ENCODE measurements at regions of chr21 and their contacts with region 1.

Region 1: GRCh38 chr21:36927719-36928117 is 38.8 kb downstream of the HLCS start:
- DNase-seq: peak; percentile 78 to 84 (median 83)
- ATAC-seq: peak; percentile 97
- H3K4me3 ChIP-seq: no peak overlapping the region
- H3K27ac ChIP-seq: no peak overlapping the region
- H3K4me1 ChIP-seq: peaks cover 0 to 3% of the 10 kb centered on the region in 2 experiments; a peak in 1 of 5 replicates
- H3K27me3 ChIP-seq: no peaks in the 10 kb centered on the region
- CTCF ChIP-seq: peak; percentile 89 to 97 (median 95)
- EP300 ChIP-seq: no peak
- POLR2A ChIP-seq: no peak
- RAD21 ChIP-seq: peak; percentile 80 to 91

Region 2: DNA sequence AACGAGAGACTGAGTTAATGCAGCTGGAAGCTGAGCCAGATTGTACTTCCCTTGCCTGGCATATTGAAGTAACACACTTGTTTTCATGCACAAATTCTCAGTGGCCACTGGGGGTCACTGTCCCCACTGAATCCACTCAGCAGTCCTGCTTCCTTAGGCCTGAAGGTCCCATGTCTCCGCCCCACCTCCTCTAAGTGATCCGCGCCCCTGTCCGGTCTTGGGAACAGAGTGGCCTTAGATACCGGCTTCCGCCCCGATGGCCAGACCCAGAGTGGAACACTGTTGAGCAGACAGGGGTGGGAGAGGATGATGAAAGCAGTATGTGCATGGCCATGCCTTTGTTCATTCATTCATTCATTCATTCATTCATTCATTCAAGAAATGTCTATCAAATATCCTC is 507.7 kb before region 1 on chr21:
- CTCF ChIA-PET with region 1: interaction called, 5 read pairs
- POLR2A ChIA-PET with region 1: no interaction called
- in situ Hi-C with region 1: no loop called
- intact Hi-C with region 1: loop called (anchors 2 kb)
- DNase-seq: peak; percentile 89 to 92 (median 90)
- ATAC-seq: peak; percentile 95
- H3K4me3 ChIP-seq: no peak overlapping the region
- H3K27ac ChIP-seq: no peak overlapping the region
- H3K4me1 ChIP-seq: peaks cover 7 to 13% of the 10 kb centered on the region in 2 experiments; a peak in 4 of 5 replicates
- H3K27me3 ChIP-seq: no peaks in the 10 kb centered on the region
- CTCF ChIP-seq: peak; percentile 86 to 96 (median 94)
- EP300 ChIP-seq: peak; percentile 38; the same call in 1 of the 2 replicates
- POLR2A ChIP-seq: no peak
- RAD21 ChIP-seq: peak; percentile 88 to 96

Region 3: GRCh38 chr21:36630485-36631206 is 297.1 kb before region 1 on chr21:
- CTCF ChIA-PET with region 1: interaction called, 15 read pairs
- POLR2A ChIA-PET with region 1: no interaction called
- in situ Hi-C with region 1: loop called (anchors 5 kb)
- intact Hi-C with region 1: loop called (anchors 1 kb)
- DNase-seq: peak; percentile 80 to 86 (median 84)
- ATAC-seq: peak; percentile 96
- H3K4me3 ChIP-seq: no peak overlapping the region
- H3K27ac ChIP-seq: no peak overlapping the region
- H3K4me1 ChIP-seq: no peaks in the 10 kb centered on the region
- H3K27me3 ChIP-seq: peaks cover 12 to 39% of the 10 kb centered on the region in 2 experiments; a peak in 3 of 5 replicates
- CTCF ChIP-seq: peak; percentile 80 to 93 (median 84)
- EP300 ChIP-seq: no peak
- POLR2A ChIP-seq: no peak
- RAD21 ChIP-seq: peak; percentile 54 to 78

Region 4: DNA sequence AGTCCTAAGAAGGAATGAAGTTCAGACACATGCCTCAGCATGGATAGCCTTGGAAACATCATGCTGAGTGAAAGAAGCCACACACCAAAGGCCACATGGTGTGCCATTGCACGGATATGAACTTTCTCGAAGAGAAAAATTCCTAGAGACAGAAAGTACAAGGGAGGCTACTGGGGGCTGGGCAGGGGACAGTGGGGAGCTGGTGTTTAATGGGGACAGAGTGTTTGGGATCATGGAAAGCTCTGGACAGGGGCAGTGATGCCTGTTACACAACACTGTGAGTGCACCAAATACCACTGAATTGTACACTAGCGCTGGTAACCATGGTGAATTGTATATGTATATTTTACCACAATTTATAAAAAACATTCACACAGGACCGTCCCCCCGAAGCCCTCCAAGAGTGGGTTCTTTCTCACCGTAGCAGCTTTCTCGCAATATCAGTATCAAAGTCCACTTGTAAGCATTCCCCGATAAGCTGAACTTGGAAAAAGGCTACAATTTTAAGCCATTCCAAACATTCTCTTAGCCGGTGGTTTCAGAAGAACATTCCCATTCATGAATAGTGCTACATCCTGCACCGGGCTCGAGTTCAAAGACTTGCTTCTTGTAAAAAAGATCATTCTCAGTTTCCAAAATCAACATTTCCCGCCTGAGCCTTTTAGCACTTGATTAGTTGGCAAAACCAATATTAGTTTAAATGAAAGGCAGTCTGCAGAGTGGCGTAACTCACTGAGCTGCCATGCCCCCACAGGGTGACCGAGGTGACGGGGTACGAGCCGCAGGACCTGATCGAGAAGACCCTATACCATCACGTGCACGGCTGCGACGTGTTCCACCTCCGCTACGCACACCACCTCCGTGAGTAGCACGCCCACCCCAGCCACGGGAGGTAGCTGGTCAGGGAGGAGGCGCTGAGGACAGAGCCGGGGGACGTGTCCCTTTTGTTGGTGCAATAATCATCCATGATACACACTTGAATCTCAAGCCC is 197.1 kb before region 1 on chr21:
- CTCF ChIA-PET with region 1: no interaction called
- POLR2A ChIA-PET with region 1: no interaction called
- in situ Hi-C with region 1: no loop called
- intact Hi-C with region 1: loop called (anchors 5 kb)
- DNase-seq: no peak
- ATAC-seq: no peak
- H3K4me3 ChIP-seq: no peak overlapping the region
- H3K27ac ChIP-seq: no peak overlapping the region
- H3K4me1 ChIP-seq: peaks cover 0 to 3% of the 10 kb centered on the region in 2 experiments; a peak in 1 of 5 replicates
- H3K27me3 ChIP-seq: peaks cover 70 to 89% of the 10 kb centered on the region in 2 experiments
- CTCF ChIP-seq: no peak
- EP300 ChIP-seq: no peak
- POLR2A ChIP-seq: no peak
- RAD21 ChIP-seq: no peak

Region 5: DNA sequence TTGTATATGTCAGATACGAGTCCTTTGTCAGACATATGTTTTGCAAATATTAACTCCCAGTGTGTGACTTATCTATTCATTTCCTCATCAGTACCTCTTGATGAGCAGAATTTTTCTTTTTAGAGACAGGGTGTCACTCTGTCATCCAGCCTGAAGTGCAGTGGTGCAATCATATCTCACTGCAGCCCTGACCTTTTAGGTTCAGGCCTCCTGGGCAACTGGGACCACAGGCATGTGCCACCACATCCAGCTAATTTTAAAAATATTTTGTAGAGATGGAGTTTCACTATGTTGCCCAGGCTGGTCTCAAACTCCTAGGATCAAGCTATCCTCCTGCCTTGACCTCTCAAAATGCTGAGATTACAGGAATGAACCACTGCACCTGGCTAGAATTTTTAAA is 54.2 kb before region 1 on chr21:
- CTCF ChIA-PET with region 1: no interaction called
- POLR2A ChIA-PET with region 1: no interaction called
- in situ Hi-C with region 1: no loop called
- intact Hi-C with region 1: no loop called
- DNase-seq: no peak
- ATAC-seq: no peak
- H3K4me3 ChIP-seq: no peak overlapping the region
- H3K27ac ChIP-seq: no peak overlapping the region
- H3K4me1 ChIP-seq: peaks cover 0 to 5% of the 10 kb centered on the region in 2 experiments; a peak in 1 of 5 replicates
- H3K27me3 ChIP-seq: no peaks in the 10 kb centered on the region
- CTCF ChIP-seq: no peak
- EP300 ChIP-seq: no peak
- POLR2A ChIP-seq: no peak
- RAD21 ChIP-seq: no peak

Region 6: DNA sequence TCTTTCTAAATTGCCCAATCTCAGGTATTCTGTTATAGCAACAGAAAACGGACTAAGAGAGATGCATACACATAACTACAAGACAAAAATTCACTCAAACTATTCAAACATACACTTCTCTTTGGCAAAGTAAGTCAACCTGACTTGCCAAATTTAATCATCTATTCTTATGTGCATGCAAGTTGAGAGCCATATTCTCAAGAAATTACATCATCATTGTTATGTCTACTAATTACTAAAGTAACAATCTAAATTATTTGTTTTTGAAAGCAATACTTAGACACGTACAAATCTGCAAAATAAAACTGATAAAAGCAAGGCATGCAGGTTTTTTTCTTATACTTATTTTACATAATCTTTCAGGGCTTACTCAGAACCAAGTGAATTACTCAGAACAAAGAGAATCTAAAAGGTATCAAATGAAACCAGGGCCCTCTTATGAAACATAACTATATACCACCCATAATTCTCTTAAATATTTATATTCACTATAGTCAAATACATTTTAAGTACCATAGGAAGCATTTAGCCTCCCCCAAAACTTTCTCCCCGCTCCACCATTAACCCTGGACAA is 23.5 kb before region 1 on chr21:
- CTCF ChIA-PET with region 1: no interaction called
- POLR2A ChIA-PET with region 1: no interaction called
- in situ Hi-C with region 1: no loop called
- intact Hi-C with region 1: no loop called
- DNase-seq: no peak
- ATAC-seq: no peak
- H3K4me3 ChIP-seq: no peak overlapping the region
- H3K27ac ChIP-seq: no peak overlapping the region
- H3K4me1 ChIP-seq: no peaks in the 10 kb centered on the region; a peak in 1 of 5 replicates
- H3K27me3 ChIP-seq: no peaks in the 10 kb centered on the region
- CTCF ChIP-seq: no peak
- EP300 ChIP-seq: no peak
- POLR2A ChIP-seq: no peak
- RAD21 ChIP-seq: no peak

Measured in K562 (cell line).